OCI-LY7 (cell line): ENCODE measurements at regions of chr13 and their contacts with region 1.

Region 1: DNA sequence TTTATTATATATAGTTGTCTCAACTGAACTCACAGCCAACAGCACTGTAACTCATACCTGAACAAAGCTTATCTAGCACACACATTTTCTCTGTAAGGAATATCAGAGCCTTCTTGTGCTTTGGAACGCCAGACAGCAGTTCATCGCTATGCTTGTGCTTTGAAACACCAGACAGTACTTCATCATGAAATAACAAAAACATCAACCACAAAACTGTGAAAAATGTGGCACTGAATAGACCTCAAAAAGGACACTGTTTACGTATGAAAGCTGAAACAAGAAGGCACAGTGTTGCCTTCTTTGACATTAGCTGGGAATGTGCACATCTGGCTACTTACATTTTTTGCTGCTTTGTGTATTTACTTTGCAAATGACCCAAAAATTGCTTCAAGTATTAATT is 160.2 kb downstream of the PDS5B start:
- DNase-seq: no peak
- H3K4me3 ChIP-seq: no peak overlapping the region
- H3K27ac ChIP-seq: no peak overlapping the region
- H3K4me1 ChIP-seq: no peaks in the 10 kb centered on the region
- CTCF ChIP-seq: no peak

Region 2: GRCh38 chr13:33828431-33829129 is 1082.1 kb after region 1 on chr13:
- CTCF ChIA-PET with region 1: no interaction called
- POLR2A ChIA-PET with region 1: interaction called, 14 read pairs
- intact Hi-C with region 1: no loop called
- DNase-seq: no peak
- H3K4me3 ChIP-seq: no peak overlapping the region
- H3K27ac ChIP-seq: no peak overlapping the region
- H3K4me1 ChIP-seq: peaks cover 3% of the 10 kb centered on the region
- CTCF ChIP-seq: no peak